Ascending aorta (tissue), 2 donors: ENCODE measurements at regions of chr4 and their contacts with region 1.

Region 1: DNA sequence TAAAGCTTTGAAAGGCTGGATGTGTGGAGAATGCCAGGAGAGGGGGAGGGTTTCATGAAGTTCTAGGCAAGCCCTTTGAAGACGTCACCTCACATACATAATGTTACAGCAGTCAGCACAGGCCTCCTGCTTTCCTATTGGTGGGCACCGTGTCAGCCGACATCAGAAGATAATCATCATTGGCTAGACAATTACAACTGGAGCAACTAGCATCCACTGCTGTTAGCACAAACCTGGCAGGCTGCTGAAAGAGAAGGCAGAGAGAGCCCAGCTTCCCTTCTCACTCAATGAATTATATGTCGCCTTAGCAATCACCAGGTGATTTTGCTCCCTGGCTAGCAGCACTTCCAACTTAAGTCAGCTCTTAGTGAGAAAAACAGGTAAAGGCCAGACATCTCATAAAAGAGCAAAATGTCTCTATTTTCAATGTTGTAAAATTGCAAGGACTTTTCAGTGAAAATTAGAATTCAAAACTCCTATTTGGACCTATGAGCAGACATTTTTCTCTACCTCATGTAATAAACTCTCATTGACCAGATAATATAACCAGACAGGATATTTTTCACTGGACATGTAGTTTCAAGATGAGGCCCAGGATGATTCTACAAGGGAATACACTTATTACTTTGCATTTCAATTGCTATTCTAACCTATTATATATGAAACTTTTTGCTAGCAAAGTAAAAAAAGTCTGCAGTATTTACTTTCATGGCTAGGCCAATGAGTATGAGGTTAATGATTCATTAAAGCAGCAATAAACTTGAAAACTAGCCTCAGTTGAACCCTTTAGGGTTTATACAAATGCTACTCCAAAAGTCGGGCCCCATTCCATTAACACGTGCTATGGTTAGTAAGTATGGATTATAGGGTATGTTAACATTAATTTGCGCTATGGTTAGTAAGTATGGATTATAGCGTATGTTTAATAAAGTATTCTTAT is 4.3 kb downstream of the ELOVL6 start:
- DNase-seq: peak; percentile 43 to 77
- H3K4me3 ChIP-seq: no peak overlapping the region
- H3K27ac ChIP-seq: no peak overlapping the region
- H3K4me1 ChIP-seq: no peaks in the 10 kb centered on the region
- H3K27me3 ChIP-seq: no peaks in the 10 kb centered on the region
- CTCF ChIP-seq: no peak

Region 2: GRCh38 chr4:109729718-109730618 is 464.1 kb before region 1 on chr4 and contains the start of gene PLA2G12A:
- intact Hi-C with region 1: loop called (anchors 10 kb)
- DNase-seq: peak; percentile 9 to 79
- H3K4me3 ChIP-seq: peak within 1 kb of the TSS; percentile 86 to 88
- H3K27ac ChIP-seq: peak within 1 kb of the TSS; percentile 70 to 71
- H3K4me1 ChIP-seq: peaks cover 0 to 6% of the 10 kb centered on the region in 2 donors
- H3K27me3 ChIP-seq: no peaks in the 10 kb centered on the region
- CTCF ChIP-seq: no peak
- total RNA-seq, gene PLA2G12A: 8.9 TPM

Region 3: GRCh38 chr4:110165382-110166285 is 28.5 kb before region 1 on chr4:
- intact Hi-C with region 1: loop called (anchors 2 kb)
- DNase-seq: no peak
- H3K4me3 ChIP-seq: no peak overlapping the region
- H3K27ac ChIP-seq: no peak overlapping the region
- H3K4me1 ChIP-seq: peaks cover 0 to 3% of the 10 kb centered on the region in 2 donors
- H3K27me3 ChIP-seq: no peaks in the 10 kb centered on the region
- CTCF ChIP-seq: no peak